ENCODE measurements at regions of chr11 and their contacts with region 1.

Region 1: GRCh38 chr11:6283453-6284023 is 23.9 kb downstream of the CCKBR start:
- DNase-seq: no peak
- H3K4me3 ChIP-seq: no peak overlapping the region
- H3K27ac ChIP-seq: no peak overlapping the region
- H3K4me1 ChIP-seq: peaks cover 10% of the 10 kb centered on the region
- H3K27me3 ChIP-seq: no peaks in the 10 kb centered on the region
- CTCF ChIP-seq: no peak

Region 2: DNA sequence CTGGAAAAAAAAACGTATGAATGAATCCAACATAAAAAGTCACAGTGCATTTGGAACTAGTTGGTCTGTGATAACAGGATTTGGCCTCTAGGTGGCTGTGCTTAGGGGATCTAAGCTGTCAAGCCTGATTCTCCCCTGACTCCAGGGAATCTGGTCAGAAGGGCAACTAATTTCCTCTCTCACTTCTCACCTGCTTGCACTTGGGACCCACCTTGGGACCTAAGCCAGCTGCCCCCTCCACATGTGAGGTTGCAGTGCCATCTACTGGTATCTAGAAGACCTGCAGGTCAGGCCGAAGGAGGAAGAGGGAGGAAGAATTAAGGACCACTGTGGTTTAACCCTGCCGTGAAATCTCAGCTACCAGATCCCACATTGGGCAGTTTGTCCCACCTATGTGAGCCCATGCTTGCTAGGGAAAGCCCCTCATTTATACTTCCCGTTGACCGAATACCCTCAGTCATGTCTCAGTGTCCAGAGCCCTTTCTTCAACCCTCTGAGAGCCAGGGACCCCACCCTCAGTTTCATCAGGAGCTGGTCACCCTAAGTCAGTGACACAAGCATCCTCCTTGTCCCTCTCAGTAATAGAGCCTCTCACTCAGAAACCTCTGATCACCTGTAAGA is 69.9 kb after region 1 on chr11:
- CTCF ChIA-PET with region 1: interaction called, 3 read pairs
- POLR2A ChIA-PET with region 1: no interaction called
- intact Hi-C with region 1: loop called (anchors 5 kb)
- DNase-seq: peak; percentile 59 to 67
- H3K4me3 ChIP-seq: no peak overlapping the region
- H3K27ac ChIP-seq: no peak overlapping the region
- H3K4me1 ChIP-seq: no peaks in the 10 kb centered on the region
- H3K27me3 ChIP-seq: no peaks in the 10 kb centered on the region
- CTCF ChIP-seq: peak; percentile 83

Measured in PC-9 (cell line).